ENCODE measurements at regions of chr2 and their contacts with region 1.

Region 1: GRCh38 chr2:11688222-11689069 is 18.5 kb upstream of the NTSR2 start:
- DNase-seq: peak; percentile 79 to 90
- ATAC-seq: peak; percentile 92

Region 2: GRCh38 chr2:11778923-11779757 is 90.7 kb after region 1 on chr2:
- intact Hi-C with region 1: loop called in 1 of 2 experiments (anchors 5 kb)
- DNase-seq: peak; percentile 69 to 88
- ATAC-seq: peak; percentile 93

Region 3: GRCh38 chr2:11784747-11785610 is 96.5 kb after region 1 on chr2:
- intact Hi-C with region 1: loop called in 1 of 2 experiments (anchors 5 kb)
- DNase-seq: peak in 1 of 2 donors; percentile 58
- ATAC-seq: peak; percentile 76